ENCODE measurements at regions of chr3 and their contacts with region 1.

Region 1: DNA sequence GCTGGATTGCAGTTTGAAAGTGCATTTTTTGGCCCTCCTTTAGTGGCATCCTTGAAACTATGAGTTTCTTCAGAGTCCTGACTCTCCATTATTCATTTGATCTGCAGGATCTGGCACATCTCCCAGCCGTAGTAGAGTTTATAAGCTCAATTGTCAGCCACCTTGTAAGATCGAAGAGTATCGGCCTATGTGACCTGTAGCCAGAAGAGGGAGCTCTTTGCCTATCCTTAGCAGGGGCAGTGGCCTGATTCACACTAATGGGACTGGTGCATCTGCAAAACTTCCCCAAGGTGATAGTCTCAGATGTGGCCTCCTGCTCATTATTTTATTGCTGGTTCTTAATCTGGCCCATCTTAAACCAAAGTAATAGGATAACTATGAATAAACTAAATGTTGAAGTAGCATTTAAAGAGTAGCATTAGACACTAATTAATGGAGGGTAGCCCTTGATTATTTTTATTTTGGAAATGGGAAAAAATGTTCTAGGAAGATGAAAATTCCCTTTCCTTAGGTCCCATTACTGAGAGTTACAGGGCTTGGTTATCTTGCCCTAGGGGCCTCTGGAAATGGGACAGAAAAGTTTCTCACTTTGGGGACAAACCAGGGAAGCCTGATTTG is 21.2 kb downstream of the GCSAM start:
- DNase-seq: peak in 1 of 2 experiments; percentile 31
- H3K4me3 ChIP-seq: no peak overlapping the region
- H3K27ac ChIP-seq: no peak overlapping the region
- H3K4me1 ChIP-seq: peaks cover 0 to 5% (median 0%) of the 10 kb centered on the region in 4 experiments; a peak in 1 of 7 replicates
- H3K27me3 ChIP-seq: no peaks in the 10 kb centered on the region
- CTCF ChIP-seq: peak; percentile 65 to 94 (median 86)
- EP300 ChIP-seq: no peak
- POLR2A ChIP-seq: no peak
- RAD21 ChIP-seq: peak; percentile 96 to 99

Region 2: GRCh38 chr3:111691293-111691909 is 420.5 kb before region 1 on chr3:
- CTCF ChIA-PET with region 1: no interaction called
- POLR2A ChIA-PET with region 1: no interaction called
- DNase-seq: no peak
- H3K4me3 ChIP-seq: no peak overlapping the region
- H3K27ac ChIP-seq: no peak overlapping the region
- H3K4me1 ChIP-seq: no peaks in the 10 kb centered on the region; a peak in 1 of 7 replicates
- H3K27me3 ChIP-seq: peaks cover 0 to 1% (median 0%) of the 10 kb centered on the region in 4 experiments; a peak in 1 of 7 replicates
- CTCF ChIP-seq: peak in 2 of 3 experiments; percentile 40 to 56; a peak in 3 of 4 replicates
- EP300 ChIP-seq: no peak
- POLR2A ChIP-seq: no peak
- RAD21 ChIP-seq: peak; percentile 66 to 75

Region 3: DNA sequence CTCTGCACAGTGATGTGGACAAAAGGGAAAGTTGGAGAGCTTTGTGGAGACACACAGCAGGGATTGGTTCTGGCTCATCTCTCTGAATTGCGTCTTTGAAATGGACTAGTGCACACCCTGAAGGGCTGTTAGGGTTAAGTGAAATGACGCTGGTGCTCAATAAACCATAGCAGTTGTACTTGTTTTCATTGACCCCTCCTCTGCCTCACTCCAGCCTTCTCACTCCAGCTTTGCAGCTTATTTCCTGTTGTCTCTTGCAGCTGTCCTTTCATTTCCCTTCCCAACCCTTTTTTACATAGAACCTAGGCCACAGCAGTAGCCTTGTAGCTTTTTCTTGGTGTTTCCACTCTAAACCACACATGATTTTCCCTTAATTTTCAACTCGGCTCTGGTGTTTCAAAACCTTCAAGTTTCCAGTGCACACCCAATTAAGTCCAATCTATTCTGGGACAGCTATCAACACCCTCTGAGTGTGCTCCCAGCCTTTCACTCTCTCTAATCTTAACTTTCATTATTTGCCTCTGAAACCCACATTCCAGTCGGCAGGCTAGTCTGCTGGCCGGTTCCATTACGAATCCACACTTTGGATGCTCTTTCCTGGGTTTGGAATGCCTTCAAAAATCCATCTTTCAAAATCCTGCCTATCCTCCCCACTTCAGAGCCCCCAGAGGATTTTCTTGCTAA is 19.3 kb before region 1 on chr3:
- CTCF ChIA-PET with region 1: interaction called, 16 read pairs
- POLR2A ChIA-PET with region 1: no interaction called
- DNase-seq: no peak
- H3K4me3 ChIP-seq: no peak overlapping the region
- H3K27ac ChIP-seq: no peak overlapping the region
- H3K4me1 ChIP-seq: peaks cover 2 to 12% (median 8%) of the 10 kb centered on the region in 4 experiments; a peak in 6 of 7 replicates
- H3K27me3 ChIP-seq: no peaks in the 10 kb centered on the region
- CTCF ChIP-seq: no peak
- EP300 ChIP-seq: no peak
- POLR2A ChIP-seq: no peak
- RAD21 ChIP-seq: no peak

Region 4: DNA sequence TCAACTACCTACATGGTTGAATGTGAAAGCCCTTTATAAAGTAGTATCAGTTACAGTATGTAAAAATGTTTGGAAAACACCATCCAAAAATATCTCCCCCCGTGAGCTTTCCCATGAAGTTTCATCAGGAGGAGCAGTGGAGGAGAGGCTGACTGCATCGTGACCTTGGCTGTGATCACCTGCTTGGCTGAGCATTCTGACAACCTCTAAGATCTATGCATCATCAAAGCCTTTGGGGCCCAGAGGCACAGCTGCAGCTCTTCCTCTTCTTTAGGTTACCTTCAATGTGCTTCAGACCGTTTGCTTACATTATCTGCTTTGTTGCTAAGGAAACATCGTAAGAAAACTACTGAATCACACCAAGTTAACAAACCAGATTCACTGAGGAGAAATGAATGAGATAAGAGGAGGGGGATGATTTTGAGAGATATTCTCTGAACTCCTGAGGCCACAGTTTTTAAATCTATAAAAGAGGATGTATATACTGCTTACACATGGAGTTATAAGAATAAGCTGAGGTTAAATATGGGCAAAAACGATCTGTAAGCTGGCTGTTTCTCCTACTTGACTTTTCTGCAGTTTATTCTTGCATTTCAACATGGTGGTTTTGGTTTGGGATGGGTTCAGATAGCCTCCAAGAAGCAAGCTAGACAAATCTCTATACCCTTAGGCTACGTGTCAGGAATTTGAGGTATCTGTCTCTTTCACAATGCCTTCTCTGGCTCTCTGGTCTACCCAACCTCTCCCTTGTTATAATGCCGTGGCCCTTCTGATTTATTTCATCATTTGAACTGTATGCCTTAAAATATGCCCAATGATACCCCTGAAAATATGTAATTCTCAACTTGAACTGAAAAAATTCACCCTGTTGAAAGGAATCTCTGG is 17.2 kb after region 1 on chr3:
- CTCF ChIA-PET with region 1: interaction called, 31 read pairs
- POLR2A ChIA-PET with region 1: interaction called, 3 read pairs
- DNase-seq: no peak
- H3K4me3 ChIP-seq: no peak overlapping the region
- H3K27ac ChIP-seq: no peak overlapping the region
- H3K4me1 ChIP-seq: peaks cover 0 to 16% (median 11%) of the 10 kb centered on the region in 4 experiments; a peak in 5 of 7 replicates
- H3K27me3 ChIP-seq: no peaks in the 10 kb centered on the region
- CTCF ChIP-seq: no peak
- EP300 ChIP-seq: no peak
- POLR2A ChIP-seq: no peak
- RAD21 ChIP-seq: no peak

Region 5: GRCh38 chr3:112136959-112137693 is 25.2 kb after region 1 on chr3:
- CTCF ChIA-PET with region 1: interaction called, 29 read pairs
- POLR2A ChIA-PET with region 1: interaction called, 4 read pairs
- DNase-seq: peak; percentile 27 to 72
- H3K4me3 ChIP-seq: no peak overlapping the region; a peak in 1 of 8 replicates
- H3K27ac ChIP-seq: peak overlapping the region; percentile 49; the same call in 1 of the 2 replicates
- H3K4me1 ChIP-seq: peaks cover 1 to 8% (median 3%) of the 10 kb centered on the region in 4 experiments; a peak in 4 of 7 replicates
- H3K27me3 ChIP-seq: no peaks in the 10 kb centered on the region
- CTCF ChIP-seq: peak in 2 of 3 experiments; percentile 60 to 74; a peak in 3 of 4 replicates
- EP300 ChIP-seq: no peak
- POLR2A ChIP-seq: 0 out of 3 replicates have a peak, but pooled peaks of 1 of the 2 experiments have one; percentile 18
- RAD21 ChIP-seq: peak; percentile 84 to 87

Region 6: GRCh38 chr3:112531358-112531781 is 419.5 kb after region 1 on chr3:
- CTCF ChIA-PET with region 1: interaction called, 10 read pairs
- POLR2A ChIA-PET with region 1: no interaction called
- DNase-seq: no peak
- H3K4me3 ChIP-seq: no peak overlapping the region
- H3K27ac ChIP-seq: no peak overlapping the region
- H3K4me1 ChIP-seq: no peaks in the 10 kb centered on the region
- H3K27me3 ChIP-seq: no peaks in the 10 kb centered on the region
- CTCF ChIP-seq: peak in 1 of 3 experiments; percentile 6; a peak in 2 of 4 replicates
- EP300 ChIP-seq: no peak
- POLR2A ChIP-seq: no peak
- RAD21 ChIP-seq: no peak; a peak in 1 of 4 replicates

Measured in H1 (cell line).